ENCODE measurements at regions of chr7 and their contacts with region 1.

Region 1: DNA sequence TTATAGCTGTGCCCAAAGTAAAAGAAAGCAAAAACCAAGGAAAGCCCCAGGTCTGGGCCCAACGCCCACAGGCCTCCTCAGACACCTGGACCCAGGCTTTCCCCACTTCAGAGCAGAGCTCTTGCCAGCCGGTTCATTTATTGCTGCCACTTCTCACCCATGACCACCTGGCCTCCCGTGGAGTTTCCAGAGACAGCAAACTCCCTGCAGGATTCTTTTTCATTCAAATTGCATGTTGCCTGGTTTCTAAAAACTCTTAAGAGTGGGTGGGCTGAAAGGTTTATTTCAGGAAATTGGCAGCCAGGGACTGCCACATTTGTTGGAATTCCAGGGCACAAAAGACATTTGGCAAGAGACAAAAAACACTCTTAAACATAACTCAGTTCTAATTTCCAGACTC is 4.7 kb downstream of the VOPP1 start:
- DNase-seq: no peak
- CTCF ChIP-seq: no peak

Region 2: GRCh38 chr7:55552320-55553023 is 15.1 kb before region 1 on chr7:
- CTCF ChIA-PET with region 1: interaction called, 19 read pairs
- POLR2A ChIA-PET with region 1: interaction called, 4 read pairs
- DNase-seq: no peak
- CTCF ChIP-seq: no peak

Measured in GM10248 (cell line).